CD4-positive, alpha-beta memory T cell (primary cell): ENCODE measurements at regions of chr1 and their contacts with region 1.

Region 1: DNA sequence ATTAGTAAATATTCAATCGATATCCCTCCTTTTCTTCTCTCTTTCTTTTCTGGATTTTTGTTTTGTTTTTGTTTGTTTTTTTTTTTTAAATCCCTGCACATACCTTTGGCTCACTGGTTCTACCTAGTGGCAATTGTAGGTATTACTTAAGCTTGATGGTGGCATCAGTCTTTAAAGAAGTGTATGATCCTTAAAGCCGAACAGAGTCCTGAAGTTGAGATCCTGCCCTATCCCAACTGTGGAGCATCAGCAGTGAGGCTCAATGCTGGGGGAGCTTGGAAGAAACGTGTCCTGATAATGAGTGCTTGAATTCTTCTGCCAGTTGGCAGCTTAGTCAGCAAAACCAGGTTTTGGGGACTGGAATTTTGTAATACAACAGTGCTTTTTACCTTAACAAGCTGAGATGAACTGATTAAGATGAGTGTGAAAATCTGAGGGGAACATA is 60.8 kb downstream of the FASLG start:
- DNase-seq: peak in 4 of 5 donors; percentile 54 to 60 (median 56)
- H3K4me3 ChIP-seq: no peak overlapping the region
- H3K4me3 Mint-ChIP-seq: peak overlapping the region in 1 of 8 donors; percentile 9
- H3K27ac ChIP-seq: no peak overlapping the region
- H3K27ac Mint-ChIP-seq: peak overlapping the region in 3 of 7 donors; percentile 3 to 37 (median 5)
- H3K4me1 ChIP-seq: peaks cover 16% of the 10 kb centered on the region
- H3K4me1 Mint-ChIP-seq: peaks cover 24 to 43% (median 31%) of the 10 kb centered on the region in 4 donors
- H3K27me3 ChIP-seq: no peaks in the 10 kb centered on the region
- H3K27me3 Mint-ChIP-seq: no peaks in the 10 kb centered on the region

Region 2: GRCh38 chr1:171245458-171246064 is 1474.2 kb before region 1 on chr1:
- CTCF ChIA-PET with region 1: no interaction called
- POLR2A ChIA-PET with region 1: no interaction called
- intact Hi-C with region 1: no loop called
- DNase-seq: peak in 4 of 5 donors; percentile 9 to 20 (median 16)
- H3K4me3 ChIP-seq: no peak overlapping the region
- H3K4me3 Mint-ChIP-seq: no peak overlapping the region
- H3K27ac ChIP-seq: no peak overlapping the region
- H3K27ac Mint-ChIP-seq: no peak overlapping the region
- H3K4me1 ChIP-seq: no peaks in the 10 kb centered on the region
- H3K4me1 Mint-ChIP-seq: no peaks in the 10 kb centered on the region
- H3K27me3 ChIP-seq: no peaks in the 10 kb centered on the region
- H3K27me3 Mint-ChIP-seq: peaks cover 0 to 14% of the 10 kb centered on the region in 2 donors

Region 3: DNA sequence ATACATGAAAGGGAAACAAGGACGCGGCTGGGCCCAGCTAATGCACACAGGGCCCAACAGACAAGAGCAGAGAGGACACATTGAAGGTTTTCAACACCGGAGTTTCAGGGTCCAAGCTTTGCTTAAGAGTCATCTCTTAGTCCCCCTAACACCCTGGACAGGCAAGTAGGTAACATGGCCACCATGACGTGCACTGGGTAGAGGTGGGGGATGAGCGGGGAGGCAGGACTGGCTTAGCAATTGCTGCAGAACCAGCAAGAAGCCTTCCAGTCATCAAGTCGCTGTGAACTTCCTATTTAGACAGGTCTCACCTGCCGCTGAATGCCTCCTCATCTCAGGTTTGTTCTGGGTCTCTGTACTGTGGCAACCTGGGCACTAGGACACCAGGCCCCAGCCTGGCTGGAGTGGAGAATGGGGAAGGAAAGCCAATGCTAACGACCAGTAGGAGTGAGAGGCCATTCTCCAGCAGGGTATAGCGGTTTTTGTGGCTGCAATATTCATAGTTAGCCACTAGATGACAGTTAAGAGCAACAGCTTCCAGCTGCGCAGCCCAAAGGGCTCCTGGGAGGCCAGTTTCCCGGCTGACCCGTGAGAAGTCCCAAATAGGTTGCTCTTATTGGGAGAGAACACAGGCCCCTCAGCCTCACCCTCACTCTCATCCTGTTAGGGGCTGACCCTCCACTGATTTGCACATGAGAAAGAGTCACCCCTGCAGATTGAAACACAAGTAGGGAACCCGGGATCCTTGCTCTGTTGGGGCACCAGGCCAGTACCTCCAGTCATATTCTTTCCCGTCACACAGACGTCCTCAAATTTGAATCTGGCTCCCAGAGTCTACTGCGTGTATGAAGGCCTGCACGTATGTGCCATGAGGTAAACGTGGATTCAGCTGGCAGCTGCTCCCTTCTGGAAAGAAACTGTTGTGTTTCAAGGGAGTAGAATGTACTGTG is 269.9 kb before region 1 on chr1:
- CTCF ChIA-PET with region 1: interaction called, 12 read pairs
- POLR2A ChIA-PET with region 1: interaction called, 3 read pairs
- intact Hi-C with region 1: loop called (anchors 1 kb)
- DNase-seq: peak; percentile 26 to 46 (median 33)
- H3K4me3 ChIP-seq: no peak overlapping the region
- H3K4me3 Mint-ChIP-seq: peak overlapping the region in 7 of 8 donors; percentile 10 to 69 (median 39)
- H3K27ac ChIP-seq: no peak overlapping the region
- H3K27ac Mint-ChIP-seq: peak overlapping the region in 3 of 7 donors; percentile 34 to 84 (median 70)
- H3K4me1 ChIP-seq: peaks cover 21% of the 10 kb centered on the region
- H3K4me1 Mint-ChIP-seq: peaks cover 5 to 32% (median 20%) of the 10 kb centered on the region in 4 donors
- H3K27me3 ChIP-seq: no peaks in the 10 kb centered on the region
- H3K27me3 Mint-ChIP-seq: no peaks in the 10 kb centered on the region

Region 4: DNA sequence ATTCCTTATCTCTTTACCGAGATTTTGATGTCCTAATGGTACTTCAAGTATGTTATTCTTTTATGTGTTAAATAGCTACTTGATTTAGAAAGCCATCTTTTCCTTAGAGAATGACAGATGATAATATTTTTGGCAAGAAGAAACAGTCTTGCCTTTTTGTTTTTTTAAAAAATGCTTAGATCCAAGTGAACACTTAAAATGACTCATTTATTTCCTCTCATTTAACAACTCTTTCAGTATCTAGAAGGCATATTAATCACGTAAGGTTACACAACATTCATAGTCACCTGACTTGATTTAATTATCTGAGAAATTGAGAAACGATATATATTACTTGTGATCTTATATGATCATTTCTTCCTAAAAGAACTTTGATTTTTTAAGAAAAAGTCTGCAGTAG is 134.4 kb before region 1 on chr1:
- CTCF ChIA-PET with region 1: interaction called, 15 read pairs
- POLR2A ChIA-PET with region 1: no interaction called
- intact Hi-C with region 1: loop called (anchors 1 kb)
- DNase-seq: no peak
- H3K4me3 ChIP-seq: no peak overlapping the region
- H3K4me3 Mint-ChIP-seq: no peak overlapping the region
- H3K27ac ChIP-seq: no peak overlapping the region
- H3K27ac Mint-ChIP-seq: peak overlapping the region in 1 of 7 donors; percentile 35
- H3K4me1 ChIP-seq: peaks cover 5% of the 10 kb centered on the region
- H3K4me1 Mint-ChIP-seq: peaks cover 7 to 28% (median 15%) of the 10 kb centered on the region in 4 donors
- H3K27me3 ChIP-seq: no peaks in the 10 kb centered on the region
- H3K27me3 Mint-ChIP-seq: no peaks in the 10 kb centered on the region

Region 5: GRCh38 chr1:172609528-172609927 is 110.2 kb before region 1 on chr1:
- CTCF ChIA-PET with region 1: interaction called, 261 read pairs
- POLR2A ChIA-PET with region 1: interaction called, 27 read pairs
- intact Hi-C with region 1: loop called (anchors 1 kb)
- DNase-seq: peak in 4 of 5 donors; percentile 34 to 41 (median 38)
- H3K4me3 ChIP-seq: no peak overlapping the region
- H3K4me3 Mint-ChIP-seq: no peak overlapping the region
- H3K27ac ChIP-seq: no peak overlapping the region
- H3K27ac Mint-ChIP-seq: peak overlapping the region in 1 of 7 donors; percentile 43
- H3K4me1 ChIP-seq: no peaks in the 10 kb centered on the region
- H3K4me1 Mint-ChIP-seq: peaks cover 4 to 9% (median 6%) of the 10 kb centered on the region in 4 donors
- H3K27me3 ChIP-seq: no peaks in the 10 kb centered on the region
- H3K27me3 Mint-ChIP-seq: no peaks in the 10 kb centered on the region

Region 6: DNA sequence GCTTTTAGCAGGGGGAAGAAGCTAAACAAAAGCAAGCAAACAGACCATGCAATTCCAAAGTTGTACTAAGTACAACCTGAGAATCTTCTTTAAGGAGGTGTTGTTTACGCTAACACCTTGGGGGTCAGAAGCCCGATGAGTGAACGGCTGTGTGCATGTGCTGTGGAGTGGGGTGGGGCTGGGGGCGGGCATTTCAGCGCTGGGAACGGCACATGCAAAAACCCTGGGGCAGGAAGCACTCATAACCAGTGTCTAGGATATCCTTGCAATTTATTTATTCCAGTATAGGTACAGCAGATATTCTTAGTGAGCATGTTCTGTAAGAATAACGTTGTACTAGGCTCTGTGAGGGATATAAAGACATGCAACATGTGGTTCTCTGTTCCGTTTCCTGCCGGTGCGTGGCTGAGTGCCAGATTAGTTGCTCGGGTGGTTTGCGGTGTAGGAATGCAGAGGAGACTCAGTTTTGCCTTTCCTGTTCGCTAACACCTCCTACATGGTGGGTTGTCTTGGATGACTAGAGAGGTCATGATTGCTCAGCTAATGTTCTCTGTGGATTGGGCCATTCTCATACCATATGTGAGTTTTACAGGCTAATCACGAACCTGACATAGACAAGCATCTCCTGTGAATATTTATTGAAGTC is 57.1 kb before region 1 on chr1:
- CTCF ChIA-PET with region 1: interaction called, 33 read pairs
- POLR2A ChIA-PET with region 1: interaction called, 6 read pairs
- intact Hi-C with region 1: loop called (anchors 2 kb)
- DNase-seq: peak; percentile 82 to 93 (median 85)
- H3K4me3 ChIP-seq: peak overlapping the region in 1 of 2 donors; percentile 34
- H3K4me3 Mint-ChIP-seq: peak overlapping the region; percentile 79 to 95 (median 88)
- H3K27ac ChIP-seq: peak overlapping the region; percentile 33
- H3K27ac Mint-ChIP-seq: peak overlapping the region; percentile 57 to 90 (median 82)
- H3K4me1 ChIP-seq: peaks cover 59% of the 10 kb centered on the region
- H3K4me1 Mint-ChIP-seq: peaks cover 57 to 81% (median 69%) of the 10 kb centered on the region in 4 donors
- H3K27me3 ChIP-seq: no peaks in the 10 kb centered on the region
- H3K27me3 Mint-ChIP-seq: no peaks in the 10 kb centered on the region

Region 7: DNA sequence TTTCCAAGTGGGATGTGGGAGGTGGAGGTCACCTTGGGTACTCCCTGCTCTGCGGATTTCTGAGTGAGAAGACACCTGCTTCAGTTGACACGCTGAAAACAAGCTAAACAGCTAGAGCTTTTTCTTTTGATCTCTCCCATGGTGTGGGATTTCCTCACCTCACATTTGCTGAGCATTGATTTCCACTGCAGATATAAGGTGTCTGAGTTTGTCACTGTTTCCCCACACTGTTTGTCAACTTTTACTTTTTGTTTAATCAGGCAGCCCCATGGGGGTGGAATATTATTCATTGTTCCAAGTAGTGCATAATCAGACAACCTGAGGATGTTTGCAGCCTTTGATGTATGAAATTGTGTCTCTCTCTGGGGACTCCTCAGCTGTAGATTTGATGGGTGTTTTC is 11.3 kb before region 1 on chr1:
- CTCF ChIA-PET with region 1: interaction called, 34 read pairs
- POLR2A ChIA-PET with region 1: interaction called, 7 read pairs
- intact Hi-C with region 1: no loop called
- DNase-seq: peak; percentile 51 to 78 (median 61)
- H3K4me3 ChIP-seq: peak overlapping the region in 1 of 2 donors; percentile 0
- H3K4me3 Mint-ChIP-seq: peak overlapping the region; percentile 24 to 74 (median 62)
- H3K27ac ChIP-seq: no peak overlapping the region
- H3K27ac Mint-ChIP-seq: peak overlapping the region; percentile 16 to 84 (median 68)
- H3K4me1 ChIP-seq: peaks cover 58% of the 10 kb centered on the region
- H3K4me1 Mint-ChIP-seq: peaks cover 20 to 36% (median 30%) of the 10 kb centered on the region in 4 donors
- H3K27me3 ChIP-seq: no peaks in the 10 kb centered on the region
- H3K27me3 Mint-ChIP-seq: no peaks in the 10 kb centered on the region

Region 8: GRCh38 chr1:172753964-172754363 is 34.2 kb after region 1 on chr1:
- CTCF ChIA-PET with region 1: no interaction called
- POLR2A ChIA-PET with region 1: no interaction called
- intact Hi-C with region 1: no loop called
- DNase-seq: no peak
- H3K4me3 ChIP-seq: no peak overlapping the region
- H3K4me3 Mint-ChIP-seq: no peak overlapping the region
- H3K27ac ChIP-seq: no peak overlapping the region
- H3K27ac Mint-ChIP-seq: peak overlapping the region in 1 of 7 donors; percentile 9
- H3K4me1 ChIP-seq: no peaks in the 10 kb centered on the region
- H3K4me1 Mint-ChIP-seq: peaks cover 0 to 3% (median 2%) of the 10 kb centered on the region in 4 donors
- H3K27me3 ChIP-seq: no peaks in the 10 kb centered on the region
- H3K27me3 Mint-ChIP-seq: peaks cover 3 to 14% of the 10 kb centered on the region in 2 donors

Region 9: GRCh38 chr1:172801771-172802322 is 82.1 kb after region 1 on chr1:
- CTCF ChIA-PET with region 1: no interaction called
- POLR2A ChIA-PET with region 1: no interaction called
- intact Hi-C with region 1: no loop called
- DNase-seq: no peak
- H3K4me3 ChIP-seq: no peak overlapping the region
- H3K4me3 Mint-ChIP-seq: no peak overlapping the region
- H3K27ac ChIP-seq: no peak overlapping the region
- H3K27ac Mint-ChIP-seq: peak overlapping the region in 1 of 7 donors; percentile 16
- H3K4me1 ChIP-seq: no peaks in the 10 kb centered on the region
- H3K4me1 Mint-ChIP-seq: no peaks in the 10 kb centered on the region
- H3K27me3 ChIP-seq: no peaks in the 10 kb centered on the region
- H3K27me3 Mint-ChIP-seq: no peaks in the 10 kb centered on the region